ENCODE measurements at regions of chr11 and their contacts with region 1.

Region 1: DNA sequence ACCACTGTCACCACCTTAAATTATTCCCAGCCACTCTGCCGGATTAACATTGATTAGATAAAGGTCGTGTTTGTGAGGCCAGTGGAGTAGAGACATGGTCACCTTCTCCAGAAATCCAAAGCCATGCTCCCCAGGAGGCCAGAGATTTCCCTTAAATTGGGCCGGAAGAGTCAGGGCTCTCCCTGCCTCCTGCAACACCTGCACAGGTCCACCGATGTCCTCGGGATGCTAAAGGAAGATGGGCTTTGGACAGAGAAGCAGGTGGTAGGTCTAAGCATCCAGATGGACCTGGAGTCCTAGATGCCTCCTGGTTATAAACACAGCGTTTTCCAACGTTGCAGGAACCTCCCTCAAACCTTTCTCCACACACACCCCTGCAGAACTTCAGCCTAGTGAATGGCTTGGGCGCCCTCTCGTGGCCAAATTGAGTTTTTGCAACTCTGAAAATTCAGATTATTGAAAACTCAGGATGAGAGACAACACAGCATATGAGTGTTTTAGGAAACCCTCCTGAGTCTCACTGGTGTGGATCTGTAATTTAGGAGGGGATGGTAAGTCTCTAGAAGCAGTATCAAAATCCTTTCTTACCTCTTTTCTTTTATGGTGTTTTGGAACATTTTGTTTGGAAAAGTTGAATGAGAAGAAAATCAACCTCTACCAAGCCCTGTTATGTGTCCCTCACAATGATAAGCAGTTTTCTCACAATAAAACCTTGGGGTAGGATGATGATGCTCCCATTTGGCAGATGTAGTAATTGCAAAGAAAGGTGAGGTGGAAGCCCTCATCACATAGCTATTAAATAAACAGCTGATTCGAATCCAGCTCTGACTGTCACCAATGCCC is 109.6 kb downstream of the RRAS2 start:
- DNase-seq: peak; percentile 79
- H3K4me3 Mint-ChIP-seq: peak overlapping the region; percentile 29
- H3K27ac Mint-ChIP-seq: no peak overlapping the region
- H3K4me1 Mint-ChIP-seq: peaks cover 24% of the 10 kb centered on the region
- H3K27me3 Mint-ChIP-seq: peaks cover 29% of the 10 kb centered on the region

Region 2: GRCh38 chr11:13772223-13773046 is 476.9 kb before region 1 on chr11:
- CTCF ChIA-PET with region 1: interaction called, 28 read pairs
- DNase-seq: peak; percentile 40
- H3K4me3 Mint-ChIP-seq: no peak overlapping the region
- H3K27ac Mint-ChIP-seq: no peak overlapping the region
- H3K4me1 Mint-ChIP-seq: peaks cover 11% of the 10 kb centered on the region
- H3K27me3 Mint-ChIP-seq: peaks cover 25% of the 10 kb centered on the region

Region 3: DNA sequence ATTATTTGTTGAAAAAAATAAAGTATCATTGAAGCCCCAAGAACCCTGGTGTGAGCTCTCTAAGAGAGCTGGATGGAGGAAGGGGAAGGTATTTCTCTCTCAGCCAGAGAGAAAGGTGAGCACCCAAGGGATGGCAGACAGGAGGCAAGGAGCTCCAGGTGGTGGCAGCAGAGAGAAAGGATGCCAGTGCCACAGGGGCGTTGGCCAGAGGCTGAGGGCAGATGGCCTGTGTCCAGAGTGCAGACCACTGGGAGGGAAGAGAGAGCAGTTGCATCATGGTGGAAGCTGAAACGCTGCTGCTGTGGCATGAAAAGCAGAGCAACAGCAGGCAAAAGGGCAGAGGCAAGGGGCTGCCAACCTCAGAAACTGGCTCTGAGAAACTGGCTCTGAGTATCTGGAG is 278.4 kb before region 1 on chr11:
- CTCF ChIA-PET with region 1: interaction called, 14 read pairs
- DNase-seq: peak; percentile 29
- H3K4me3 Mint-ChIP-seq: no peak overlapping the region
- H3K27ac Mint-ChIP-seq: no peak overlapping the region
- H3K4me1 Mint-ChIP-seq: peaks cover 29% of the 10 kb centered on the region
- H3K27me3 Mint-ChIP-seq: peaks cover 28% of the 10 kb centered on the region

Region 4: DNA sequence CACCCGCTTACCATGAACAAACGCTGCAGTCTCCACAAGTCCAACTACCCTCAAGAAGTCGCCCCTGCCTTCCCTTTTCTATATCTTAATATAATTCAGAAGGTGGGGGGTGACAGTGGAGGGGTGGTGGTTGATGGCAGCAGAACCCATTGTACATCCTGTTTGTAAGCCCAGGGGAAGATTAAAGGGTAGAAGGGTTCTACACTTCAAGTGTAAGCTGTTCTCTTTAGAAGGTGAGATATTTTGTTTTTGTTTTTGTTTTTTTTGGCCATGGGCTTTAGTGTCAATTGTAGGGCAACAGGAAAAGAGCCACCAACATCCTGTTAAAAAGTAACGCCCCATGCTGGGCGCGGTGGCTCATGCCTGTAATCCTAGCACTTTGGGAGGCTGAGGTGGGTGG is 144.5 kb after region 1 on chr11:
- CTCF ChIA-PET with region 1: no interaction called
- DNase-seq: peak; percentile 21
- H3K4me3 Mint-ChIP-seq: no peak overlapping the region
- H3K27ac Mint-ChIP-seq: no peak overlapping the region
- H3K4me1 Mint-ChIP-seq: peaks cover 6% of the 10 kb centered on the region
- H3K27me3 Mint-ChIP-seq: peaks cover 26% of the 10 kb centered on the region

Measured in activated naive CD4-positive, alpha-beta T cell treated with anti-CD3 and anti-CD28 coated beads, Interleukin-2, amount 10 ng/mL, durations not matched to agents 7 days and 5 days (primary cell).